Activated naive CD4-positive, alpha-beta T cell treated with anti-CD3 and anti-CD28 coated beads, Interleukin-2, amount 10 ng/mL, durations not matched to agents 7 days and 5 days (primary cell): ENCODE measurements at regions of chr1 and their contacts with region 1.

Region 1: GRCh38 chr1:201511941-201512539 is 5.1 kb upstream of the CSRP1 start:
- DNase-seq: no peak
- H3K4me3 Mint-ChIP-seq: no peak overlapping the region
- H3K27ac Mint-ChIP-seq: no peak overlapping the region
- H3K4me1 Mint-ChIP-seq: peaks cover 33% of the 10 kb centered on the region
- H3K27me3 Mint-ChIP-seq: no peaks in the 10 kb centered on the region

Region 2: GRCh38 chr1:201436393-201436792 is 75.6 kb before region 1 on chr1:
- CTCF ChIA-PET with region 1: interaction called, 37 read pairs
- DNase-seq: no peak
- H3K4me3 Mint-ChIP-seq: no peak overlapping the region
- H3K27ac Mint-ChIP-seq: no peak overlapping the region
- H3K4me1 Mint-ChIP-seq: peaks cover 5% of the 10 kb centered on the region
- H3K27me3 Mint-ChIP-seq: peaks cover 34% of the 10 kb centered on the region

Region 3: GRCh38 chr1:201447911-201448871 is 63.8 kb before region 1 on chr1:
- CTCF ChIA-PET with region 1: interaction called, 119 read pairs
- DNase-seq: peak; percentile 81
- H3K4me3 Mint-ChIP-seq: no peak overlapping the region
- H3K27ac Mint-ChIP-seq: no peak overlapping the region
- H3K4me1 Mint-ChIP-seq: peaks cover 25% of the 10 kb centered on the region
- H3K27me3 Mint-ChIP-seq: peaks cover 63% of the 10 kb centered on the region

Region 4: DNA sequence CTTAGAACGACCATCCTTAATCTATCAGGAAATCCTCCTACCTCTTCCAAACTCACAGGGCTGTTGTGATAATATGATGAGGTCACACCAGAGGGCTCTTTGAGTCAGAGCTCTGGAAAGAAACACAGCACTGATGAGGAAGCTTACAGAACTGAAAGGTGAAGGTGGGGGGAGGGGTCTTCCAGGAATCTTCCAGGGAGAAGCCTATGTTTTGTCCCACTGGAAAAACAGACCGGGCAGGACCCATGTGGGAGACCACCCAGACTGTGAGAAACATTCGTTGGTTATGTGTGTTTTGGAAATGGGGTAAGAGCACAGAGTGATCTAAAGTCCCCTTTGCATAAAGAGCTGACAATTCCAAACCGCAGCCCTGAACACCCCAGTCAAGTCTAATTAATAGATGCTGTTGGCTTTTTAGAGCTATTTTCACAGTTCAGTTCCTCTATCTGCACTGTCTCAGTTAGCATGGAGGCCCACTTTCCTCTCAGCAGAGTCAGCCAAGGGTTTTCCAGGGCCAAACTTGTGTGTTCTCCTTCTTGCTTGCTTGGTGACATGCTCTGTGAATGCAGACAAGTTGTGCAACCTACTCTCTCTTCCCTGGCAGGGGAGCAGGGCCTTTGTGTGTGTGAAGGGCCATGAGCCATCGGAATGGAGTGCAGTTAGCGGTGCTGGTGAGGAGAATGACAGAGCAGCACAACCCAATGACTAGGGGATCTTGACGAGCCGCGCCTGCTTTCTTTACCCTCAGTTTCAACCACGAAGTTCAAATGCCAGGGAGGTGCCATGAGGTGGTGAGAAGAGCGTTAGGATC is 55.3 kb before region 1 on chr1:
- CTCF ChIA-PET with region 1: interaction called, 10 read pairs
- DNase-seq: no peak
- H3K4me3 Mint-ChIP-seq: no peak overlapping the region
- H3K27ac Mint-ChIP-seq: no peak overlapping the region
- H3K4me1 Mint-ChIP-seq: peaks cover 20% of the 10 kb centered on the region
- H3K27me3 Mint-ChIP-seq: peaks cover 46% of the 10 kb centered on the region

Region 5: DNA sequence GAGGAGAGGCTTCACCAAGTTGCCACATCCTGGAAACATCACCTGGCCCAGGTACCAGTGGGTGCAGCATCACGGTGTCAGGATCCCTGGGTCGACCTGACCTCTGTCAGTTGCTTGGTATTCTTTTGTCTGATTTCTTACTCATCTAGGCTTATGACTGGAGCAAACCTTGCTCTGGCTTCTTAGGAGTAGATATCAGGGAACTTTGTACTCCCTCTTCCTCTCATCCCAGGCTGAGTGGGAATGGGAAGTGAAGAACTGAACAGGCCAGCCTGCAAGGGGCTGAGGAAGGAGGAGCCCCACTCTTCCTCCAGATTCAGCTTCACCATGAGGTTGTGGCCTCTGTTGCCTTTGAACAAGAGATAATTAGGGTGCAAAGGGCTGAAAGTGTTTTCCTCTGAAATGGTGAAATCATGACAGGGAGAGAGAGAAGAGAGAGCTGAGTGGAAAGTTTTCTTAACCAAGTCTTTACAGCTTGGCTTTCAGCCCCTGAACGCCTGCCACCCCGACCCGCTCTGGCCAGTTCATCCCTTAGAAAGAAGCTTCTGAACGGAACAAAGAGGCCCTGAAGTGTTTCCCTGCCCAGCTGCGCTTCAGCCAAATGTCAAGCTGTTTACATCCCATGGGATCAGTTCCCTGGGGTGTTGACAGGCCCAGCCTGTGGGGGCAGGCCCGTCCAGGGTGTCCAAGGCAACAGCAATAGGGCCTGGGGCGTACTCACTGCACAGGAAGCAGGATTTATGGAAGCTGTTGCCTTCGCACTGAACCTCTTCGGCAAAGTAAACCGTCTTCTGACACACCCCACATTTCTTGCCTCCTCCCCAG is 16.4 kb before region 1 on chr1:
- CTCF ChIA-PET with region 1: interaction called, 349 read pairs
- DNase-seq: no peak
- H3K4me3 Mint-ChIP-seq: no peak overlapping the region
- H3K27ac Mint-ChIP-seq: no peak overlapping the region
- H3K4me1 Mint-ChIP-seq: peaks cover 2% of the 10 kb centered on the region
- H3K27me3 Mint-ChIP-seq: no peaks in the 10 kb centered on the region

Region 6: DNA sequence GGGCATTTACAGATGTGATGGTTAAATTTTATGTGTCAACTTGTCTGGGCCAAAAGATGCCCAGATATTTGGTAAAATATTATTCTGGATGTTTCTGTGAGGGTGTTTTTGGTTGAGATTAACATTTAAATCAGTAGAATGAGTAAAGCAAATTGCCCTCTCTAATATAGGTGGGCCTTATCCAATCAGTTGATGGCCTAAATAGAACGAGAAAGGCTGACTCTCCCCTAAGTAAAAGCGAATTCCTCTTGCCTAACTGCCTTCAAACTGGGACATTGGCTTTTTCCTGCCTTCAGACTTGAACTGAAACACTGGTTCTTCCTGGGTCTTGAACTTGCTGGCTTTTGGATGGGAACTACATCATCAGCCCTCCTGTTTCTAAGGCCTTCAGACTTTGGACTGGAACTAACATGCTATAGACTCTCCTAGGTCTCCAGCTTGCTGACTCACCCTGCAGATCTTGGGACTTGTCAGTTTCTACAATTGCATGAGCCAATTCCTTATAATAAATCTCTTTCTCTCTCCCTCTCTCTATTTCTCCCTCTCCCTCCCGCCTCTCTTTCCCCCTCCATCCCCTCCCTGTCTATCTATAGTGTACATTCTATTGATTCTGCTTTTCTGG is 16.7 kb after region 1 on chr1:
- CTCF ChIA-PET with region 1: interaction called, 21 read pairs
- DNase-seq: no peak
- H3K4me3 Mint-ChIP-seq: no peak overlapping the region
- H3K27ac Mint-ChIP-seq: no peak overlapping the region
- H3K4me1 Mint-ChIP-seq: peaks cover 3% of the 10 kb centered on the region
- H3K27me3 Mint-ChIP-seq: no peaks in the 10 kb centered on the region

Region 7: GRCh38 chr1:201536543-201536942 is 24.5 kb after region 1 on chr1:
- CTCF ChIA-PET with region 1: interaction called, 11 read pairs
- DNase-seq: no peak
- H3K4me3 Mint-ChIP-seq: no peak overlapping the region
- H3K27ac Mint-ChIP-seq: no peak overlapping the region
- H3K4me1 Mint-ChIP-seq: peaks cover 23% of the 10 kb centered on the region
- H3K27me3 Mint-ChIP-seq: peaks cover 61% of the 10 kb centered on the region